Breast epithelium (tissue), 4 donors: ENCODE measurements at regions of chr11 and their contacts with region 1.

Region 1: GRCh38 chr11:67391304-67392132 is at the start of gene RAD9A:
- DNase-seq: peak; percentile 95
- H3K4me3 ChIP-seq: peak within 1 kb of the TSS; percentile 74 to 98 (median 93)
- H3K27ac ChIP-seq: peak within 1 kb of the TSS; percentile 78 to 84
- H3K4me1 ChIP-seq: peaks cover 4% of the 10 kb centered on the region in 2 donors
- H3K27me3 ChIP-seq: no peaks in the 10 kb centered on the region
- CTCF ChIP-seq: peak in 1 of 3 donors; percentile 7
- POLR2A ChIP-seq: peak; percentile 36
- total RNA-seq, gene RAD9A: 11.0 to 31.0 (median 24.6) TPM

Region 2: DNA sequence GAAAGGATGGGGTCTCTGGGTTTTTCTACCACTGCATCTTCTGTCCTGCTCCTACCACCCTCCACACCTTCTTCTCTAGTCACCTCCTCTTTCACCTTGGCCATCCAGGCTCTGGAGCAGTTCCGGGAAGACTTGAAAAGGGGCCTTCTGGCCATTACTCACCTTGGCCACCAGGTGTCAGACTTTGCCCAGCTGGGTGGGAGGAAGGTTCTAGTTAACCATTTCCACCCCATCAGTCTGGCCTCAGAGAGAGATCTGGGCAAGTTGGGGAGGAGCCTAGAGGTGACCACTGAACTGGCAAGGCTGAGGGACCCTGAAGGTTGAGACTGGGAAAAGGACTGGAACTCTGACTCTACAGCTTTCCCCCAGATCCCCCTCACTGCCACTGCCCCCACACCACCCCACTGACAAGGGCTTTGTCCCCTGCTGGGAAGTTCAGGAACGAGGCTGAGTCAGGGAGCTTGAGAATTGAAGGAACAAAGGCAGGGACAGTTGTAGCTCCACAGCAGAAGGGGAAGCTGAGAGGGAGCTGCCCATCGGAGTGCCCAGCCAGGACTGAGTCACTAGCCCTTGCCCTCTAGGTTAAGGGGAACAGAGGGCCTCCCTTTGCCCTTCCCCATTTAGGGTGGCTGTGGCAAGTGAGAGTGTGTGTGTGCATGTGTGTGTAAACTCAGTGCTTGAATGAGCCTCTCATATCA is 34.5 kb before region 1 on chr11:
- intact Hi-C with region 1: loop called (anchors 5 kb)
- DNase-seq: no peak
- H3K4me3 ChIP-seq: no peak overlapping the region
- H3K27ac ChIP-seq: peak overlapping the region; percentile 49 to 97
- H3K4me1 ChIP-seq: peaks cover 9 to 23% of the 10 kb centered on the region in 2 donors
- H3K27me3 ChIP-seq: no peaks in the 10 kb centered on the region
- CTCF ChIP-seq: peak; percentile 93 to 99 (median 98)
- POLR2A ChIP-seq: no peak

Region 3: DNA sequence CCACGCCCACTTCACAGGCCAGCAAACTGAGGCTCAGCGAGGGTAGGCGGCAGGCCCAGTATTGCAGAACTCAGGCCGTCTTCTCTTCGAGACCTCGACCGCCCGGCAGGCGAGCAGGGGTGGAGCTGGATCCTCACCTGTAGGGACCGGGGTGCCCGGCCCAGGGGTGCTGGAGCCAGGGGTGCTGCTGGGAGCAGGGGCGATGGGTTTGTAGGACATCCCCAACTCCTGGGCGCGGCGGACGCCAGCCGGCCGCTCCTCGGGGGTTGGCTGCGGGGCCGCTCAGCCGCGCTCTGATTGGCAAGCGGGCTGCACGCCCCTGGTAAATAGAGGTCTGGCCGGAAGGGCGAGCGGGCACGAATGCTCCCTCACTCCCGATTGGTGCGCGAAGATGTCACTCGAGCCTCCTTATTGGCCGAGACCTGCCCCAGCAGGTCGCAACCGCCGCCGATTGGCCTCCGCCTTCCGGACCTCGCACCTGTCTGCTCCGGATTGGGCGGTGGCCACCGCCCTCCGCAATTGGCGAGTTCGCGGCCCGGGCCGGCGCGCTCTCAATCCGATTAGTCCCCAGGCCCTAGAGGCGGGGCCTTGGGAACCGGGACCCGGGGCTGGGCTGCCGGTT is 116.5 kb after region 1 on chr11 and contains the start of gene CDK2AP2:
- intact Hi-C with region 1: loop called (anchors 10 kb)
- DNase-seq: peak; percentile 99
- H3K4me3 ChIP-seq: peak within 1 kb of the TSS; percentile 55 to 82 (median 77)
- H3K27ac ChIP-seq: peak within 1 kb of the TSS; percentile 98
- H3K4me1 ChIP-seq: peaks cover 17 to 27% of the 10 kb centered on the region in 2 donors
- H3K27me3 ChIP-seq: no peaks in the 10 kb centered on the region
- CTCF ChIP-seq: no peak
- POLR2A ChIP-seq: peak; percentile 44
- total RNA-seq, gene CDK2AP2: 32.1 to 35.4 (median 32.8) TPM